Right lobe of liver (tissue), 6 donors: ENCODE measurements at regions of chr12 and their contacts with region 1.

Region 1: GRCh38 chr12:54439521-54440255 is 20.6 kb upstream of the ITGA5 start:
- DNase-seq: no peak
- ATAC-seq: peak; percentile 87 to 93 (median 88)
- H3K4me3 ChIP-seq: no peak overlapping the region
- H3K27ac ChIP-seq: peak overlapping the region in 2 of 3 donors; percentile 37 to 56
- H3K4me1 ChIP-seq: peaks cover 0 to 28% (median 5%) of the 10 kb centered on the region in 4 donors
- H3K27me3 ChIP-seq: no peaks in the 10 kb centered on the region
- CTCF ChIP-seq: peak; percentile 82 to 96 (median 84)
- POLR2A ChIP-seq: no peak

Region 2: GRCh38 chr12:54398995-54399793 is 40.5 kb before region 1 on chr12:
- intact Hi-C with region 1: loop called (anchors 5 kb)
- DNase-seq: peak; percentile 78 to 88 (median 85)
- ATAC-seq: peak; percentile 86 to 93 (median 90)
- H3K4me3 ChIP-seq: no peak overlapping the region
- H3K27ac ChIP-seq: no peak overlapping the region
- H3K4me1 ChIP-seq: no peaks in the 10 kb centered on the region
- H3K27me3 ChIP-seq: no peaks in the 10 kb centered on the region
- CTCF ChIP-seq: peak; percentile 98
- POLR2A ChIP-seq: no peak

Region 3: GRCh38 chr12:54404061-54405004 is 35.4 kb before region 1 on chr12:
- intact Hi-C with region 1: loop called (anchors 5 kb)
- DNase-seq: no peak
- ATAC-seq: peak; percentile 26 to 64 (median 47)
- H3K4me3 ChIP-seq: no peak overlapping the region
- H3K27ac ChIP-seq: no peak overlapping the region
- H3K4me1 ChIP-seq: no peaks in the 10 kb centered on the region
- H3K27me3 ChIP-seq: no peaks in the 10 kb centered on the region
- CTCF ChIP-seq: peak; percentile 88 to 92 (median 91)
- POLR2A ChIP-seq: no peak